ENCODE measurements at regions of chr19 and their contacts with region 1.

Region 1: GRCh38 chr19:3721131-3721886 is 13.1 kb downstream of the TJP3 start:
- DNase-seq: no peak
- ATAC-seq: peak; percentile 85
- H3K4me3 ChIP-seq: peak overlapping the region; percentile 30 to 40
- H3K27ac ChIP-seq: no peak overlapping the region
- H3K4me1 ChIP-seq: peaks cover 8% of the 10 kb centered on the region
- H3K27me3 ChIP-seq: no peaks in the 10 kb centered on the region
- CTCF ChIP-seq: no peak

Region 2: DNA sequence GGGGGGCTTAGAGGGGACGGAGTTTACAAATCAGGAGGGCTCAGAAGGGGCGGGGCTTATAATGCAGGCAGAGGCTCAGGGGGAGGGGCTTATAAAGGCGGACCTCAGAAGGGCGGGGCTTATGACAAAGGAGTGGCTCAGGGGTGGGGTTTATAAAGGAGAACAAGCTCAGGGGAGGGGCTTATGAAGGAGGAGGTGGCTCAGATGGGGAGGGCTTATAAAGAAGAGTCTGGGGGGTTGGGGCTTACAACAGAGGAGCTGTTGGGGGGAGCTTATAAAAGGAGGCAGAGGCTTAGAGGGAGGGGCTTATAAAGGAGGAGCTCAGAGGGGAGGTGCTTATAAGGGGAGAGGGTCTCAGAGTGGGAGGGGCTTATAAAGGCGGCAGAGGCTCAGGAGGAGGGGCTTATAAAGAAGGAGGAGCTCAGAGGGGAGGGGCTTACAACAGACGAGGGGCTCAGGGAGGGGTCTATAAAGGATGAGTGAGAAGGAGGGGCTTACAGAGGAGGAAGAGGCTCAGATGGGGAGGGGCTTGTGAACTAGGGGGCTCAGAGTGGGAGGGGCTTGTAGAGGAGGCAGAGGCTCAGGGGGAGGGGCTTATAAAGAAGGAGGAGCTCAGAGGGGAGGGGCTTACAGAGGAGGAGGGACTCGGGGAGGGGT is 242.0 kb before region 1 on chr19:
- CTCF ChIA-PET with region 1: no interaction called
- POLR2A ChIA-PET with region 1: no interaction called
- in situ Hi-C with region 1: no loop called
- intact Hi-C with region 1: no loop called
- DNase-seq: no peak
- ATAC-seq: no peak; the same call in 1 of the 2 replicates
- H3K4me3 ChIP-seq: no peak overlapping the region
- H3K27ac ChIP-seq: no peak overlapping the region
- H3K4me1 ChIP-seq: no peaks in the 10 kb centered on the region
- H3K27me3 ChIP-seq: no peaks in the 10 kb centered on the region
- CTCF ChIP-seq: no peak

Region 3: DNA sequence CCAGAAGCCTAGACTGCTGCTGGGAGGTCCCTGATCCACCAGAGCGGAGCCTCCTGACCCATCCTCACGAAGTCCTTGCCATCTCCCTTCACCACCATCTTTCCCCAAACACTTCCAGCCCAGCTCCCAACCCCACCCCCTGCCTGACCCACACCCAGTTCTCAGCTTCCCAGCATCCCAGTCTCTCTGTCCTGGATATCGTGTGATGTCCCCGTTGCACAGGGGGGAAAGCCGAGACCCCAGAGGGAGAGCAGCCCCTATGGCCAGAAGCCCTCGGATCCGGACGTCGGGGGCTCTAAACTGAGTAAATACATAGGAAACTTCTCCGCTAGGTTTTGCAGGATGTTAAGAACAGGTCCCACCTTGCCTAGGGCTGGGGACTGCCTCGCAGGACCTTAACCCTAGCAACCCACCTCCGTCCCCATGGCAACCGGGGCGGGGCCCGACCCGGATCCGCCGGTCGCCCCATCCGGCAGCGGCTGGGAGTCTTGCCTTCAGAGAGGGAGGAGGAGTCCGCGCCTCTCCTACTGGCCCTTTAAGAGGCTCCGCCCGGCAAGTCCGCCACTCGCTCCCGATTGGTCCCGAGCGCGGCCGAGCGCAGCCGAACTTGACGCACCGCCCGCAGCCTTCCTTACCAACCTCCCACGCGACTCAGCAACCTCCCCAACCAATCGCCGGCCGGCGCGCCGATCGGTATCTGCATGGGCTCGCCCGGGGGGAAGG is 149.0 kb before region 1 on chr19:
- CTCF ChIA-PET with region 1: interaction called, 12 read pairs
- POLR2A ChIA-PET with region 1: no interaction called
- in situ Hi-C with region 1: no loop called
- intact Hi-C with region 1: no loop called
- DNase-seq: peak; percentile 93
- ATAC-seq: peak; percentile 93
- H3K4me3 ChIP-seq: peak overlapping the region; percentile 54 to 74
- H3K27ac ChIP-seq: peak overlapping the region; percentile 78
- H3K4me1 ChIP-seq: peaks cover 4% of the 10 kb centered on the region; the same call in 1 of the 2 replicates
- H3K27me3 ChIP-seq: no peaks in the 10 kb centered on the region
- CTCF ChIP-seq: no peak

Region 4: GRCh38 chr19:3771906-3772455 is 50.7 kb after region 1 on chr19 and contains the start of gene RAX2:
- CTCF ChIA-PET with region 1: no interaction called
- POLR2A ChIA-PET with region 1: no interaction called
- in situ Hi-C with region 1: no loop called
- intact Hi-C with region 1: no loop called
- DNase-seq: no peak
- ATAC-seq: no peak
- H3K4me3 ChIP-seq: no peak within 1 kb of the TSS
- H3K27ac ChIP-seq: no peak within 1 kb of the TSS
- H3K4me1 ChIP-seq: no peaks in the 10 kb centered on the region
- H3K27me3 ChIP-seq: no peaks in the 10 kb centered on the region
- CTCF ChIP-seq: no peak
- total RNA-seq, gene RAX2: not detected

Region 5: GRCh38 chr19:3785938-3786824 is 64.9 kb after region 1 on chr19 and contains the start of gene MATK:
- CTCF ChIA-PET with region 1: no interaction called
- POLR2A ChIA-PET with region 1: no interaction called
- in situ Hi-C with region 1: no loop called
- intact Hi-C with region 1: no loop called
- DNase-seq: no peak
- ATAC-seq: no peak
- H3K4me3 ChIP-seq: no peak within 1 kb of the TSS
- H3K27ac ChIP-seq: no peak within 1 kb of the TSS
- H3K4me1 ChIP-seq: no peaks in the 10 kb centered on the region; the same call in 1 of the 2 replicates
- H3K27me3 ChIP-seq: no peaks in the 10 kb centered on the region
- CTCF ChIP-seq: no peak
- total RNA-seq, gene MATK: 0.21 TPM

Measured in Panc1 (cell line).